ENCODE measurements at regions of chr6 and their contacts with region 1.

Region 1: GRCh38 chr6:32047850-32048766 is 9.9 kb downstream of the CYP21A2 start:
- DNase-seq: peak; percentile 88
- ATAC-seq: peak; percentile 71
- H3K4me3 Mint-ChIP-seq: no peak overlapping the region
- H3K27ac Mint-ChIP-seq: no peak overlapping the region
- H3K4me1 Mint-ChIP-seq: peaks cover 2% of the 10 kb centered on the region; the same call in 1 of the 2 replicates
- H3K27me3 Mint-ChIP-seq: no peaks in the 10 kb centered on the region; the same call in 1 of the 2 replicates
- CTCF ChIP-seq: peak; percentile 92

Region 2: GRCh38 chr6:31784098-31784925 is 263.8 kb before region 1 on chr6:
- CTCF ChIA-PET with region 1: no interaction called
- POLR2A ChIA-PET with region 1: no interaction called
- DNase-seq: no peak
- ATAC-seq: no peak
- H3K4me3 Mint-ChIP-seq: no peak overlapping the region
- H3K27ac Mint-ChIP-seq: no peak overlapping the region; the same call in 1 of the 2 replicates
- H3K4me1 Mint-ChIP-seq: no peaks in the 10 kb centered on the region
- H3K27me3 Mint-ChIP-seq: no peaks in the 10 kb centered on the region
- CTCF ChIP-seq: no peak

Region 3: DNA sequence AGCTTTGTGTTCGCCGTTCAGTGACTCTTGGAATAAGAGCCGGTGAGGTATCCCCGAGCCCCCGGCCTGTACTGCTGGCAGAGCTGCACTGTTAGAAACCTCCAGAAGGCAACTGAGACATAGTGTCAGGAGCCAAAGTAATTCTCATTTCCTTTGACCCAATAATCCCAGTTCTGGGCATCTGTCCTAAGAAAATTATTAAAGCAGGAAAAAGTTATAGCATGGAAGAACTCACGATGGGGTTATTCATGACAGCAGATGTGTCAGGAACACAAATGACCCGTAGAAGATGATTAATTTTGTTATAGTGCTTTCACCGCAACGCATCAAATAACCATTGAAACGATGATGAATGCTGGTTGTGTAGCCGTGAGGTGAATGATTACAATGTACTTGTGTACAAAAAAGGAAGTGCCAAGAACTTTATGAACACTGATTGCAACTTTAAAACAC is 10.4 kb after region 1 on chr6:
- CTCF ChIA-PET with region 1: interaction called, 20 read pairs
- POLR2A ChIA-PET with region 1: no interaction called
- DNase-seq: no peak
- ATAC-seq: no peak
- H3K4me3 Mint-ChIP-seq: no peak overlapping the region
- H3K27ac Mint-ChIP-seq: no peak overlapping the region
- H3K4me1 Mint-ChIP-seq: peaks cover 8% of the 10 kb centered on the region
- H3K27me3 Mint-ChIP-seq: no peaks in the 10 kb centered on the region
- CTCF ChIP-seq: no peak

Region 4: GRCh38 chr6:32070814-32071543 is 22.9 kb after region 1 on chr6:
- CTCF ChIA-PET with region 1: interaction called, 14 read pairs
- POLR2A ChIA-PET with region 1: no interaction called
- DNase-seq: no peak
- ATAC-seq: no peak; the same call in 1 of the 2 replicates
- H3K4me3 Mint-ChIP-seq: no peak overlapping the region
- H3K27ac Mint-ChIP-seq: peak overlapping the region; percentile 14; the same call in 1 of the 2 replicates
- H3K4me1 Mint-ChIP-seq: peaks cover 13% of the 10 kb centered on the region
- H3K27me3 Mint-ChIP-seq: no peaks in the 10 kb centered on the region
- CTCF ChIP-seq: no peak

Region 5: GRCh38 chr6:32076321-32076809 is 28.3 kb after region 1 on chr6:
- CTCF ChIA-PET with region 1: interaction called, 15 read pairs
- POLR2A ChIA-PET with region 1: no interaction called
- DNase-seq: no peak
- ATAC-seq: no peak
- H3K4me3 Mint-ChIP-seq: no peak overlapping the region
- H3K27ac Mint-ChIP-seq: no peak overlapping the region
- H3K4me1 Mint-ChIP-seq: peaks cover 4% of the 10 kb centered on the region
- H3K27me3 Mint-ChIP-seq: no peaks in the 10 kb centered on the region
- CTCF ChIP-seq: no peak

Region 6: DNA sequence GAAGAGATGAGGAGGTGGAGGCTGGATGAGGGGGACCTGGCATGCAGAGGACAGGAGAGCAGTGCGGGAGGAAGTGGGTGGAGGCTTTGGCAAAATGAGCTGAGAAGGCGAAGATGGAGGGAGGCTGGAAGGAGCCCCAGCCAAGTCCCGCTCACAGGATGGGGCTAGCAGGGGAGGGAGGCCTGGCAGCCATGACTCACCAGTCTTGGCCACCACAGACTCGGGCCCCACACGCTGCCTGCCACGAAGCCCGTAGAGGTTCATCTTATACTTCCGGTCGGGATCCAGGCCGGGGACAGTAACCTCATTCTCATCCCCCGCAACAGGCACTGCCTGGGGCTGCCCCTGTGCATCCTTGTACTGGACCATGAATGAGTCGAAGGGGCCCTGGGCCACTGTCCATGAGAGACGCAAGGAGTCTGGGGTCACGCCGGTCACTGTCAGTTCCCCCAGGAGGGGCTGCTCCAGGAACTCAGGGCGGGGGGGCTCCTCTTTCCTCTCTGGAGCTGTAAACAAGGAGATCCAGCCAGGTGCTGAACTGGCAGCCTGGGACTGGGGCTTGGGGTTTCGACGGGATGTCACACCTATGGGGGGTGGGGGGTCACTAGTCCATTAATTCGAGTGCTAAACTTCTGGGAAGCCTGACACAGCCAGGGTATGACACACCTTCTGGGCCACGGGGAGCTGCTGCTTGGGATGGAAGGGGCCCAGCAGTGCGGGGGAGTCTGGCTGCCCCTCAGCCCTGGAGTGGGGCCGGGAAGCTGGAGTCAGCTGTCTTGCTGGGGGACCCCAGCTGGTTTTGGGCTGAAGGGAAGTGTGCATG is 33.3 kb after region 1 on chr6:
- CTCF ChIA-PET with region 1: interaction called, 18 read pairs
- POLR2A ChIA-PET with region 1: no interaction called
- DNase-seq: no peak
- ATAC-seq: no peak
- H3K4me3 Mint-ChIP-seq: no peak overlapping the region
- H3K27ac Mint-ChIP-seq: no peak overlapping the region
- H3K4me1 Mint-ChIP-seq: peaks cover 5% of the 10 kb centered on the region
- H3K27me3 Mint-ChIP-seq: peaks cover 6% of the 10 kb centered on the region
- CTCF ChIP-seq: no peak

Region 7: DNA sequence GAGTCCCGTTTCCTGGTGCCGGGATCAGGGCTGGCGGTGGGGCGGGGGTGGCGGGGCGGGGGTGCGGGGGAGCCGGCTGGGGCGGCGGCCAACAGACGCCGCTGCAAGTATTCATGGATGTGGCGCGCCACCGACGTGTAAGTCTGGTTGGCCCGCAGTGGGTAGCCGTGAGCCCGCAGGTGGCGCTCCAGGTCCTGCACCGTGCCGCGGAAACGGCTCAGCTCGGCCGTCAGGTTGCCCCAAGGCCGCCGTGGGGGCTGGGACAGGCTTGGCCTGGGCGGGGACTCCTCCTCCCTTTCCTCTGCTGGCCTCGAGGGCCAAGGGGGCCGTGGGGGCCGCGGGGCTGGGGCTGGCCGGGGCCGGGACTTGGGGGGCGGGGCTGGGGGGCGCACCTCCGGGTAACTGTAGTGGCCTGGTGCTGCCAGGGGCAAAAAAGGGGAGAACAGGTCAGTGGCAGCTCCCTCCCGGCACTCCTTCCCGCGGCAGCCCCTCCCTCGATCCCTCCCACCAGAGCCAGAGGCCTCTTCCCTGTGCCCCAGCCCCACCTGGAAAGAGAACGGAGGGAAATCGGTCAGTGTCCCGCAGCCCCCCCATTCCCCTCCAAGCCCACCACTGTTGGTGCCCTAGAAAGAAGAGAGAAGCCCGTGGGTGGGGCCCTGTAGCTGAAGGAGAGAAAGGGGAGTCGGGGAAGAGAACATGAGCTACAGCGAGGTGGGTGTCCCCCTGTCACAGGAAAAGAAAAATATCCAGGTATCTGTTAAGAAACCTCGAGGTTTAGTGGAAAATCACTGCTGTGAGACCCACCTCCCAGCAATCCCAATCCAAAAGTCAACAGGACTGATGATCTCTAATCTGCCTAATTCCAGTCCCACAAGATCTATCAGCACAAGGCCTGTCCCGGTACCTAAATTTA is 39.7 kb after region 1 on chr6:
- CTCF ChIA-PET with region 1: interaction called, 18 read pairs
- POLR2A ChIA-PET with region 1: no interaction called
- DNase-seq: peak; percentile 93
- ATAC-seq: peak; percentile 94
- H3K4me3 Mint-ChIP-seq: peak overlapping the region; percentile 53
- H3K27ac Mint-ChIP-seq: no peak overlapping the region
- H3K4me1 Mint-ChIP-seq: peaks cover 16% of the 10 kb centered on the region
- H3K27me3 Mint-ChIP-seq: peaks cover 13% of the 10 kb centered on the region
- CTCF ChIP-seq: 0 out of 2 replicates have a peak, but pooled peaks have one; percentile 27

Region 8: DNA sequence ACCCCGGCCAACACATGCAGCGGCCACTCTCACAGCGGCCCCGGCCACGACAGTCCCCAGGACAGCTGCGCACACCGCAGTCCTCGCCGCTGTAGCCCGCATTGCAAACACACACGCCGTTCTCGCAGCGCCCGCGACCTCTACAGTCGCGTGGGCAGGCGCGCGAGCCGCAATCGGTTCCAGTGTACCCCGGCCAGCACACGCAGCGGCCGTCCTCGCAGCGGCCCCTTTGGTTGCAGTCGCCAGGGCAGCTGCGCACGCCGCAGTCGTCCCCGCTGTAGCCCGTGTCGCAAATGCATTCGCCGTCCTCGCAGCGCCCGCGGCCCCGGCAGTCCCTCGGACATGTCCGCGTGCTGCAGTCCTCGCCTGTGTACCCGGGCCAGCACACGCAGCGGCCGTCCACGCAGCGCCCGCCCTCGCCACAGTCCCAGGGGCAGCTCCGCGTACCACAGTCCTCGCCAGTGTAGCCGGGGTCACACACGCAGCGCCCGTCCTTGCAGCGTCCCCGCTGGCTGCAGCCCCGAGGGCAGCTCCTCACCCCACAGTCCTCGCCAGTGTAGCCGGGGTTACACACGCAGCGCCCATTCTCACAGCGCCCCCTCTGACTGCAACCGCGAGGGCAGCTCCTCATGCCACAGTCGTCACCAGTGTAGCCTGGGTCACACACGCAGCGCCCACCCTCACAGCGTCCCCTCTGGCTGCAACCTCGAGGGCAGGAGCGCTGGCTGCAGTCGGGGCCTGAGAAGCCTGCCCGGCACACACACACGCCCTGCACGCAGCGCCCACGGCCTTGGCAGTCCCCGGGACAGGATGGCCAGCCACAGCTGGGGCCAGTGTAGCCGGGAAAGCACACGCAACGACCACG is 48.5 kb after region 1 on chr6:
- CTCF ChIA-PET with region 1: interaction called, 23 read pairs
- POLR2A ChIA-PET with region 1: no interaction called
- DNase-seq: no peak
- ATAC-seq: peak; percentile 76
- H3K4me3 Mint-ChIP-seq: no peak overlapping the region
- H3K27ac Mint-ChIP-seq: no peak overlapping the region
- H3K4me1 Mint-ChIP-seq: no peaks in the 10 kb centered on the region
- H3K27me3 Mint-ChIP-seq: peaks cover 2% of the 10 kb centered on the region; the same call in 1 of the 2 replicates
- CTCF ChIP-seq: no peak

Measured in WTC11 (cell line).